Cardiac septum (tissue), 1 donor: ENCODE measurements at regions of chr7 and their contacts with region 1.

Region 1: DNA sequence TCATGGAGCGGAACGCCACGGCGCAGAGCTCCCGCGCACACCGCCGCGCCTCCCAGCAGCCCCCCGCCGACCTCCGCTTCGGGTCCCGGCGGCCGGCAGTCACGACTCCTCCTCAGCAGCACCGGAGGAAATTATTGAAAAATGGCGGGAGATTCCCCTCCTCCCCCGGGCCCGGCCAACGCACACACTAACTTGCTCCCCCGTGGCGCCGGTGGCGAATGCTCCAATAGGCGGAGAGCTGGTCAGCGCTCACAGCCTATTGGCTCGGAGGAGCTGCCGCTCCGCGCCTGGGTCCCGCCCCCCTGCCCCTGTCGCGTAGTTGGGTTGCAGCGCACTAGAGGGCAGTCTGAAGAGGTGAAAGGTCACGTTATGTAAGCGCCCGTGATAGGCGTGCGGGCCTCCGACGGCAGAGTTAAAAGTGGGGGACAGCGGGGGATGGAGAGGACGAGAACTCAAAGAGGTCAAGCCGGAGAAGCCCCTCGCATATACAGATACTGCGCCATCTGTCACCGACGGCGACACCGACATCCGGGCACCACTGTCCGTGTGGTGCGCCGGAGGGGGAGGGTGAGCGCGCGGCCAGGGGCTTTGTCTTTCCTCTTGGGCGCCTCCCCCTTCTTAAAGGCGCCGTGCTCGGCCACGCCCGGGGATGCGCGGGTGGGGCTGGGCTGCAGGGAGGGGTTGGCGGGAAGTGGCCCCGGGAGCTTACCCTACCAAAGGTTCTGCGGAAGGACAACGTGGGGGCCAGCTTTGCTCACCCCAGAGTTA is at the start of gene BAZ1B:
- DNase-seq: peak; percentile 99
- total RNA-seq, gene BAZ1B: 45.7 TPM

Region 2: GRCh38 chr7:73557108-73557396 is 34.8 kb after region 1 on chr7:
- intact Hi-C with region 1: loop called (anchors 2 kb)
- DNase-seq: peak; percentile 96

Region 3: DNA sequence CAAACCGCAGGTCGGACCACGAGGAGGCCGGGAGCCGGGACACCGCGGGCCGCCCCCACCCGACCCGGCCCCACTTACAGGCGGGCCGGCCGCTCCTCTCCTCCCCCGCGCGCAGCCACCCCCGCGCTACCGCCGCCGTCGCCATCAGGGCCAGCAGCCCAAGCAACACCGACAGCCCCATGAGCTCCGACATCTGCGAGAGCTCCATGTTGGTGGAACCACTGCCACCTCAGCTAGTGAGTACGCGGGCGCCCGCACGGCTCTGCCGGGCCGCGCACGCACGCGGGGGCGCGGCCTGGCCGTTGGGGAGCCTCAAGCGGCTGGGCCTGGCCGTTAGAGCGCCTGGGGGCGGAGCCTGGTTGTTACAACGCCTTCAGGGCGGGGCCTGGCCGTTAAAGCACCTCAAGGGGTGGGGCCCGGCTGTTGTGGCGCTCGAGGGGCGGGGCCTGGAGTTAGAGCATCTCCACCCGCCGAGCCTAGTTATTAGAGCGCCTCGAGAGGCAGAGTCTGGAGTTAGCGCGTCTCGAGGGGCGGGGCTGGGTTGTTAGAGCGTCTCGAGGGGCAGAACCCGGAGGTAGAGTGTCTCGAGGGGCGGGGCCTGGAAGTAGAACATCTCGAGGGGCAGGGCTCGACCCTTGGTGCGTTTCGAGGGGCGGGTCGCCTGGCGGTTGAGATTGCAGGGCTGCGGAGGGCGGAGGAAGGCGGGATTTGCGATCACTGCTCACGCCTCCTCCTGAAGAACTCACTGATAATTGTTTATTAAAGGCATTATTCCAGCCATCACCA is 56.2 kb after region 1 on chr7 and contains the start of gene TBL2:
- intact Hi-C with region 1: loop called (anchors 2 kb)
- DNase-seq: peak; percentile 100
- total RNA-seq, gene TBL2: 13.6 TPM